IMR-90 (cell line): ENCODE measurements at regions of chr4 and their contacts with region 1.

Region 1: GRCh38 chr4:82423245-82424054 is 6.8 kb downstream of the HNRNPDL start:
- DNase-seq: peak; percentile 69
- ATAC-seq: peak; percentile 7; the same call in 1 of the 2 replicates
- H3K4me3 ChIP-seq: no peak overlapping the region
- H3K27ac ChIP-seq: no peak overlapping the region
- H3K4me1 ChIP-seq: peaks cover 6% of the 10 kb centered on the region
- H3K27me3 ChIP-seq: no peaks in the 10 kb centered on the region
- CTCF ChIP-seq: no peak
- POLR2A ChIP-seq: peak; percentile 67; the same call in 1 of the 2 replicates
- RAD21 ChIP-seq: no peak

Region 2: GRCh38 chr4:82354788-82355187 is 68.7 kb before region 1 on chr4:
- CTCF ChIA-PET with region 1: no interaction called
- POLR2A ChIA-PET with region 1: interaction called, 10 read pairs
- dilution Hi-C with region 1: no loop called
- in situ Hi-C with region 1: no loop called
- intact Hi-C with region 1: no loop called
- DNase-seq: no peak
- ATAC-seq: no peak
- H3K4me3 ChIP-seq: no peak overlapping the region
- H3K27ac ChIP-seq: no peak overlapping the region
- H3K4me1 ChIP-seq: peaks cover 3% of the 10 kb centered on the region; the same call in 1 of the 2 replicates
- H3K27me3 ChIP-seq: no peaks in the 10 kb centered on the region
- CTCF ChIP-seq: no peak
- POLR2A ChIP-seq: no peak
- RAD21 ChIP-seq: no peak

Region 3: GRCh38 chr4:82379964-82380733 is 43.3 kb before region 1 on chr4:
- CTCF ChIA-PET with region 1: no interaction called
- POLR2A ChIA-PET with region 1: no interaction called
- dilution Hi-C with region 1: no loop called
- in situ Hi-C with region 1: loop called (anchors 5 kb)
- intact Hi-C with region 1: no loop called
- DNase-seq: no peak
- ATAC-seq: no peak
- H3K4me3 ChIP-seq: no peak overlapping the region
- H3K27ac ChIP-seq: no peak overlapping the region
- H3K4me1 ChIP-seq: no peaks in the 10 kb centered on the region
- H3K27me3 ChIP-seq: no peaks in the 10 kb centered on the region
- CTCF ChIP-seq: no peak
- POLR2A ChIP-seq: no peak
- RAD21 ChIP-seq: no peak

Region 4: GRCh38 chr4:83150653-83151330 is 727.3 kb after region 1 on chr4:
- CTCF ChIA-PET with region 1: no interaction called
- POLR2A ChIA-PET with region 1: no interaction called
- dilution Hi-C with region 1: no loop called
- in situ Hi-C with region 1: no loop called
- intact Hi-C with region 1: no loop called
- DNase-seq: no peak
- ATAC-seq: no peak
- H3K4me3 ChIP-seq: no peak overlapping the region
- H3K27ac ChIP-seq: no peak overlapping the region
- H3K4me1 ChIP-seq: no peaks in the 10 kb centered on the region
- H3K27me3 ChIP-seq: peaks cover 1% of the 10 kb centered on the region; the same call in 1 of the 2 replicates
- CTCF ChIP-seq: no peak
- POLR2A ChIP-seq: no peak
- RAD21 ChIP-seq: no peak